K562 (cell line): ENCODE measurements at regions of chr1 and their contacts with region 1.

Region 1: DNA sequence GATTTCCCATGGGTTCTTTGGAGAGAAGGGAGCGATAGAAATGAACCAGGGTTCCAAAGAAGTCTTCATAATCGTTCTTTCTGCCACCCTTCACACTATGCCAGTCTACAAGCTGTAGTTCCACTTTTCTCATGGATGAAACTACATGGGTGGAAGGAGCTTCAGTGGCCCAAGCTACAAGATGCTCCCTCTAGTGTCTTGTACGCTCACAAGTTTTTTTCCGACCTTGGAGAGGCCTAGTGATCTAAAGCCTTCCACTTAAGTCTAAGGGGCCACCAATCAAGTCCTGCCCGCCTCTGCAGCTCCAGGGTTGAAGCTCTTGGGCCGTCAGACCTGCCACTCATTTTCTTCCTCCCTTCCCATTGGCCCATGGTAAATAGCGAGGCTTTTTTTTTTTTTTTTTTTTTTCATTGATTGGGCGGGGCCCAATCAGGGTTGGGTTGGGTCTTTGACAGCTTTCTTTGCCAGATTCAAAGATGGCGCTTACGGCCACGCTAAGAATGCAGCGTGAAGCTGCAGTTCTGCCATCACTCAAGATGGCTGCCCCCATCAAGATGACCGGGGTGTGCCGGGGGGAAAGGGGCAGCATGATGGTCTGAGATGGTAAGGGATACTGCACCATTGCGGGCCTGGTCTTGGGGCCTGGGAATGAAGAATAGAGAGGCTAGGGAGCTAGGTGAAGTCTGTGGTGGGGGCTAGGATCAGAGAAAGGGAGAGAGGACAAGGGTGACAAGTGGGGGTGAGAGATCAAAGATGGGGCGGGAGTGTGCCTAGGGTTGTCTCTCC is at the start of gene TOMM40L:
- DNase-seq: peak; percentile 93 to 98 (median 95)
- ATAC-seq: peak; percentile 95
- H3K4me3 ChIP-seq: peak within 1 kb of the TSS; percentile 70
- H3K27ac ChIP-seq: peak within 1 kb of the TSS; percentile 79
- H3K4me1 ChIP-seq: peaks cover 15 to 17% of the 10 kb centered on the region in 2 experiments; a peak in 3 of 5 replicates
- H3K27me3 ChIP-seq: no peaks in the 10 kb centered on the region
- CTCF ChIP-seq: peak; percentile 72 to 88 (median 84)
- EP300 ChIP-seq: no peak
- POLR2A ChIP-seq: peak; percentile 87
- RAD21 ChIP-seq: peak; percentile 65 to 82
- polyA plus RNA-seq, gene TOMM40L: 9.6 to 12.9 TPM

Region 2: DNA sequence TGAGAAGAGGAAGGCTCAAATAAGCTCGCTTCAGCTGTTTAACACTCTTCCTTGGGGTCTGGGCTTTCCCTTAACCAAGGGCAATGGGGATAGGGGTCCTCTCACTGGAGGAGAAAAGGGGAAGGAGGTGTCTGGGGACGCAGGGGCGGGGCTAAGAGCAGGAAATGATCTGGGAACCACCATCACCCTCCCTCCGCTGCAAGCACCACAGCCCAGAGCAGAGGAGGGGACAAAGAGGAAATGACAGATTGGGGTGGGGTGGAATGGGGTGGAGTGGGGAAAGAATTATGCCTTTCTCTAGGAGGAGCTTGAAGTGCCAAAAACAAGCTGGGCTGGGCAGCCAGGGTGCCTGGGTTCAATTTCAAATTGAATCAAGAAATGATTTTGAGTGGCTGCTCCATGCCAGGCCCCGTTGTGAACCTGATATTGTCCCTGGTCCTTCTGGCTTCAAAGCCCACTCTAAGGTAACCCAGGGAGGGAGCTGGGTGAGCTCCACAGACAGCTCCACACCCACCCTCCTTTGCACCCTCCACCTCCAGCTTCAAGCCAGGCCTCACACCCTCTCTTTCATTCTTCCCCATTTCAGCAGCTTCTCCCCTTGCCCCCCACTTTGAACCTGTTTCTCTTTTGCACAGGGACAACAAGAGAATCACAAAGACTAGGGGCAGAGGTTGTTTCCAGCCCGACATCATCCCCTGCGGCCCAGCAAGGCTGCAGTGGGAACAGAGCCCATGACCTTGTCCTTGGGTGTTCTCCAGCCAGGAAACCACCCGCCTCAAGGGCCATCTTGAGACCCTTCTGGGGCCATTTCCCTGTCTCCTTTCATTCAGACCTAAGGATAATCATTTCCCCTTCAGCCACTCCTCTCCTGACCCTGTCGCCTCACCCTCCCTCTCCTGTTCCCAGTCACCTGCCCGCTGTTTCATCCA is 157.2 kb before region 1 on chr1:
- CTCF ChIA-PET with region 1: no interaction called
- POLR2A ChIA-PET with region 1: no interaction called
- in situ Hi-C with region 1: no loop called
- intact Hi-C with region 1: no loop called
- DNase-seq: peak in 2 of 4 experiments; percentile 59 to 62
- ATAC-seq: peak; percentile 84
- H3K4me3 ChIP-seq: no peak overlapping the region
- H3K27ac ChIP-seq: no peak overlapping the region
- H3K4me1 ChIP-seq: peaks cover 15 to 21% of the 10 kb centered on the region in 2 experiments
- H3K27me3 ChIP-seq: no peaks in the 10 kb centered on the region; a peak in 1 of 5 replicates
- CTCF ChIP-seq: no peak
- EP300 ChIP-seq: no peak
- POLR2A ChIP-seq: no peak
- RAD21 ChIP-seq: no peak

Region 3: DNA sequence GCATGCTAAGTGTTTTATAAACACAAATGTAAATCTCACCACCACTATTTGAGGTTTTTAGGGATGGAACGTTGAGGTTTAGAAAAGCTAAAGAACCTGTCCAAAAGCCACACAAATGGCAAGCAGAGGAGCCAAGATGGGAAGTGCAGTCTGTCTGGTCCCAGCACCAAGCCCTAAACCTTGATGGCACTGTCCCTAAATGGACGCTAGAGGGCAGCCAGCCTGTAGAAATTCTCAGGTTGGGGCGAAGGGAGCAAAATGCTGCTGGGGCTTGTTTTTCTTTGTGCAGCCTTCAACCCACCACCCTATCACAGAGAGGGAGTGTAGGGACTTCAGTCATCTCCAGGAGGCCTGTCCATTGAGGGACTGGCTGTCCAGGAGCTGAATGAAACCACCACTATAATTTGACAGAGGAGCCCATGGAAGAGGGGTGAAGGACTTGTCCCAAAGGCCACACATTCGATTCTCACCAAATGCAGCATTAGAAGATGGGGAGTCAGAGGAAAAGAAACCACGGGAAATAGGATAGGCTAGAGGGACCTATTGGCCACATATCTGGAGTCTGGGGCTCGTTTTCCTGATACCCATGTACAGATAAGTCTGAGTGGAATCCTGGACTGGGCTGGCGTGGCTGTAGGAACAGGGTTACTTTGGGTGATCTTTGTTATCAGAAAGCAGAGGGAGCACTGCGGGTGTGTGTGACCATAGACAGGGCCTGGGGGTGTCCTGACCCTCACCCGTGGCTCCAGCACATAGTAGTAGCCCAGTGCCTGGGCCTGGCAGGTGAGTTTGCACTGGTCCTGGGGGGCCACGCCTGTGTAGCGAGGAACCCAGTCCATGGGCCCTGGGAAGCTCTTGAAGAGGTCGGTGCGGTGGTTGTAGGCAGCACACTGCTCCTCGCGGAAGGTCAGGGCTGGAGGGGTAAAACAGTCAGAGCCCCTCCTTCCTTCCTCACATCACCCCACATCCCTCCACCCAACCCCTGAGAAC is 33.0 kb before region 1 on chr1:
- CTCF ChIA-PET with region 1: interaction called, 5 read pairs
- POLR2A ChIA-PET with region 1: no interaction called
- in situ Hi-C with region 1: no loop called
- intact Hi-C with region 1: loop called (anchors 2 kb)
- DNase-seq: peak; percentile 79 to 86 (median 80)
- ATAC-seq: peak; percentile 94
- H3K4me3 ChIP-seq: no peak overlapping the region
- H3K27ac ChIP-seq: 0 out of 3 replicates have a peak overlapping the region, but pooled peaks have one; percentile 15
- H3K4me1 ChIP-seq: peaks cover 19 to 33% of the 10 kb centered on the region in 2 experiments
- H3K27me3 ChIP-seq: no peaks in the 10 kb centered on the region
- CTCF ChIP-seq: peak; percentile 93 to 97 (median 95)
- EP300 ChIP-seq: no peak; the same call in 1 of the 2 replicates
- POLR2A ChIP-seq: no peak
- RAD21 ChIP-seq: peak; percentile 76 to 91

Region 4: GRCh38 chr1:161266836-161267235 is 41.1 kb after region 1 on chr1:
- CTCF ChIA-PET with region 1: no interaction called
- POLR2A ChIA-PET with region 1: no interaction called
- in situ Hi-C with region 1: no loop called
- intact Hi-C with region 1: no loop called
- DNase-seq: no peak
- ATAC-seq: no peak
- H3K4me3 ChIP-seq: no peak overlapping the region
- H3K27ac ChIP-seq: no peak overlapping the region
- H3K4me1 ChIP-seq: no peaks in the 10 kb centered on the region
- H3K27me3 ChIP-seq: peaks cover 3 to 29% of the 10 kb centered on the region in 2 experiments; a peak in 4 of 5 replicates
- CTCF ChIP-seq: no peak
- EP300 ChIP-seq: no peak
- POLR2A ChIP-seq: no peak
- RAD21 ChIP-seq: no peak

Region 5: GRCh38 chr1:161292631-161293030 is 66.9 kb after region 1 on chr1:
- CTCF ChIA-PET with region 1: interaction called, 7 read pairs
- POLR2A ChIA-PET with region 1: no interaction called
- in situ Hi-C with region 1: loop called (anchors 5 kb)
- intact Hi-C with region 1: loop called (anchors 2 kb)
- DNase-seq: no peak
- ATAC-seq: no peak
- H3K4me3 ChIP-seq: no peak overlapping the region
- H3K27ac ChIP-seq: no peak overlapping the region
- H3K4me1 ChIP-seq: peaks cover 0 to 3% of the 10 kb centered on the region in 2 experiments; a peak in 1 of 5 replicates
- H3K27me3 ChIP-seq: no peaks in the 10 kb centered on the region
- CTCF ChIP-seq: no peak
- EP300 ChIP-seq: no peak
- POLR2A ChIP-seq: no peak
- RAD21 ChIP-seq: no peak

Region 6: GRCh38 chr1:161357073-161357472 is 131.3 kb after region 1 on chr1:
- CTCF ChIA-PET with region 1: no interaction called
- POLR2A ChIA-PET with region 1: no interaction called
- in situ Hi-C with region 1: no loop called
- intact Hi-C with region 1: no loop called
- DNase-seq: no peak
- ATAC-seq: no peak
- H3K4me3 ChIP-seq: no peak overlapping the region
- H3K27ac ChIP-seq: no peak overlapping the region
- H3K4me1 ChIP-seq: no peaks in the 10 kb centered on the region
- H3K27me3 ChIP-seq: no peaks in the 10 kb centered on the region
- CTCF ChIP-seq: no peak
- EP300 ChIP-seq: no peak
- POLR2A ChIP-seq: no peak
- RAD21 ChIP-seq: no peak

Region 7: DNA sequence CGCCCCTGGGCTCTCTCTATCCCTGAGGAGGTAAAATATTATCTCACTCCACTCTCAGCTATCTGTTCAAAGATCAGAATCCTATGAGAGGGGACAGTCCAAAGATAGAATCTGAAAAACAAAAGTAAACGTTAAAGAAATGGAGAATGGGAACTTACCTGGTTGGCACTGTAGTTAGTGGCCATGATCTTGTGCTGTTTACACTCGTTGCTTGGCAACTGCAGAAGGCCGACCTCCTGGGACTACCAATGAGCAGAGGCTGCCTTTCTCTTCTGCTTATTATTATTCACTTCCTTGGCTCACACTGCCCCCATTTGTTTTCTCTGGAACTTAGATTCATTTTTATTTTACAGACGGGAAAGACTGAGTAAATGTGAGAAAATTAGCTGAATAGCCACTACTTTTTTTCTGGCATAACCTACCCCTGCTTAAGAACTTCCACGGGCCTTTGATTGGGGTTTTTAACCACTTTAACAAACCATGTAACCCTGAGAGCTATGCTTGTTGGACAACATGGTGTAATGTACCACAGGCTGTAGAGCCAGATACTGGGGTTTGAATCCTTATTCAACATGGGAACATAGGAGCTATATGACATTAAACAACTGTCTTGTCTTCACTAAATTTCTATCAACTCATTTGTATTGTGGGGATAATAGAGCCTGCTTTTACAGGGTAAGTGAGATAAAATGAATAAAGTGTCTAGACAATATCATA is 142.1 kb after region 1 on chr1 and contains the start of gene CFAP126:
- CTCF ChIA-PET with region 1: interaction called, 3 read pairs
- POLR2A ChIA-PET with region 1: interaction called, 3 read pairs
- in situ Hi-C with region 1: no loop called
- intact Hi-C with region 1: loop called (anchors 5 kb)
- DNase-seq: peak; percentile 70 to 79 (median 76)
- ATAC-seq: peak; percentile 99
- H3K4me3 ChIP-seq: no peak within 1 kb of the TSS
- H3K27ac ChIP-seq: no peak within 1 kb of the TSS; the same call in 2 of the 3 replicates
- H3K4me1 ChIP-seq: peaks cover 2 to 3% of the 10 kb centered on the region in 2 experiments; a peak in 3 of 5 replicates
- H3K27me3 ChIP-seq: no peaks in the 10 kb centered on the region
- CTCF ChIP-seq: peak in 1 of 3 experiments; percentile 51; a peak in 1 of 6 replicates
- EP300 ChIP-seq: no peak
- POLR2A ChIP-seq: no peak
- RAD21 ChIP-seq: peak in 1 of 2 experiments; percentile 43; a peak in 3 of 4 replicates
- polyA plus RNA-seq, gene CFAP126: not detected

Region 8: GRCh38 chr1:161440312-161440894 is 214.7 kb after region 1 on chr1:
- CTCF ChIA-PET with region 1: no interaction called
- POLR2A ChIA-PET with region 1: no interaction called
- in situ Hi-C with region 1: no loop called
- intact Hi-C with region 1: no loop called
- DNase-seq: peak; percentile 82 to 89 (median 86)
- ATAC-seq: peak; percentile 79
- H3K4me3 ChIP-seq: peak overlapping the region; percentile 89
- H3K27ac ChIP-seq: peak overlapping the region; percentile 90
- H3K4me1 ChIP-seq: peaks cover 5 to 18% of the 10 kb centered on the region in 2 experiments; a peak in 4 of 5 replicates
- H3K27me3 ChIP-seq: no peaks in the 10 kb centered on the region
- CTCF ChIP-seq: peak; percentile 72 to 88 (median 75)
- EP300 ChIP-seq: no peak
- POLR2A ChIP-seq: peak; percentile 51; the same call in 1 of the 2 replicates
- RAD21 ChIP-seq: peak; percentile 8 to 36; a peak in 2 of 4 replicates